CD4-positive, alpha-beta T cell (primary cell): ENCODE measurements at regions of chr4 and their contacts with region 1.

Region 1: DNA sequence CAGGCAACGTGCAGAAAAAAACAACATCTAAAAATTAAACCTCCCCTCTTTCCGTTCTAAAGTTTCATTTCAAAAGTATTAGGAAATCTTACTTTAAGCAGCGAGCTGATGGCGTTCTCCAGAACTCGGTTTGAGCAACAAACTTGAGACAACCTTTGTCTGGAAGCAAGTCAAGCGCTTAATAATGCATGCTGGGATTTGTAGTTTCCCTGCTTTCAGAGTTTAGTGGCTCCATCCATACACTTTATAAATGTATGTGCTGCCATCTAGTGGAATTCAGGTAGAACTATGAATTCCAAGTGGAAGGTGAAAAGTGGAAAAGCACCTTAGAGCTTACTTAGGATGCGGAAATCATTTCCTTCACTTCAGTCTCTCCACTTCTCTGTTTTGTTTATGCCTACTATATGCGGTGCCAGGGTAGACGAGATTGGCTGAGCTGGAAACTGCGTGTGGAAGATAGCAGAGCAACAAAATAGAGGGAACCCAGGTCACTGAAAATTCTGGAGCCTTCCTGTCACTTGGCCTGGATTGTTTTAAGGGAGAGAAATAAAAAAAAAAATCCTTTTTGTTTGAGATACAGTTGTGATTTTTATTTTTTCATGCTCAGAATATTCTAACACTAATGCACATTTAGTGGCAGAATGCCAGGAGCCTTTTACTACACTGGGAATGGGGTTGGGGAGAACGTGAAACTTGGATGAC is at the start of gene BDH2:
- DNase-seq: peak in 10 of 14 experiments; percentile 7 to 92 (median 36)
- ATAC-seq: peak; percentile 99
- H3K4me3 ChIP-seq: peak within 1 kb of the TSS; percentile 52
- H3K4me3 Mint-ChIP-seq: peak within 1 kb of the TSS; percentile 92
- H3K27ac ChIP-seq: no peak within 1 kb of the TSS
- H3K27ac Mint-ChIP-seq: peak within 1 kb of the TSS; percentile 79
- H3K4me1 ChIP-seq: peaks cover 14% of the 10 kb centered on the region
- H3K4me1 Mint-ChIP-seq: peaks cover 33% of the 10 kb centered on the region
- H3K27me3 ChIP-seq: no peaks in the 10 kb centered on the region
- H3K27me3 Mint-ChIP-seq: no peaks in the 10 kb centered on the region
- CTCF ChIP-seq: peak; percentile 82
- total RNA-seq, gene BDH2: 9.9 to 10.3 TPM

Region 2: GRCh38 chr4:102430461-102430910 is 669.4 kb before region 1 on chr4:
- CTCF ChIA-PET with region 1: interaction called, 4 read pairs
- POLR2A ChIA-PET with region 1: interaction called, 3 read pairs
- intact Hi-C with region 1: loop called (anchors 5 kb)
- DNase-seq: peak in 1 of 14 experiments; percentile 13
- ATAC-seq: no peak
- H3K4me3 ChIP-seq: peak overlapping the region; percentile 66
- H3K4me3 Mint-ChIP-seq: peak overlapping the region; percentile 87
- H3K27ac ChIP-seq: no peak overlapping the region
- H3K27ac Mint-ChIP-seq: peak overlapping the region; percentile 74
- H3K4me1 ChIP-seq: no peaks in the 10 kb centered on the region
- H3K4me1 Mint-ChIP-seq: peaks cover 6% of the 10 kb centered on the region
- H3K27me3 ChIP-seq: no peaks in the 10 kb centered on the region
- H3K27me3 Mint-ChIP-seq: no peaks in the 10 kb centered on the region
- CTCF ChIP-seq: no peak

Region 3: DNA sequence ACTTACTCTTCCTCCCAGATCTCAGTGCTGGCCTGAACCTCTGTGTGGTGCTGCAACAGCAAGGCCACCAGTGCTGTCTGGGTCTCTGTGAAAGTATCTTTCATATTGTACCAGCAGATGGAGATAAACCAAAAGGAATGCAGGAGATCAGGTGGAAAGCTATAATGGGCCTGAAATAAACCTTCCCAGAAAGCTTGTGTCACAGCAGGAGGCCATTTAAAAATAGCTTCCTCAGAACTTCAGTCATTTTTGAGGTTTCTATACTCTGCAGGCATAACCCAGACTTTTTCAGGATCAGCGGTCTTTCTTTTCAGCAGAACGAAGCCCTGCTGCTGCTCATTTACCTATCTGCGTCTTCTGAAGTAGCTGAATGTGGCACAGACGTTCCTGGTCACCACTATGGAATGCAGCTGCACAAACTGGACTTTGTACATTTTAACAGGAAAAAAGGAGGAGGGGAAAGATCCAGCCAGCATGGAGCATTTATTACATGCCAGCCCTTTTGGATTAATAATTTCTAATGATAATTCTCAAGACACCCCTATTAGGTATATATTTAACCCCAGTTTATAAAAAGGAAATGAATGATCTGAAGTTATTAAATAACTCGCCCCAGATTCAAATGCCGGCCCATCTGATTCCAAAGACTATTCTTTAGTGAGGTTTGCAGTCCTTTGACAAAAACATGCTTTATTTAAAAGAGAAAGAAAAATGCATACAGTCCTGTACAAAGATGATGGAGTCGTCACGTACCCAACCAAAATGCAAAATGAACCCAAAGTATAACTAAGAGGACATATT is 478.9 kb before region 1 on chr4:
- CTCF ChIA-PET with region 1: interaction called, 3 read pairs
- POLR2A ChIA-PET with region 1: no interaction called
- intact Hi-C with region 1: loop called in 1 of 2 experiments (anchors 5 kb)
- DNase-seq: peak in 3 of 14 experiments; percentile 48 to 60 (median 56)
- ATAC-seq: peak; percentile 48
- H3K4me3 ChIP-seq: no peak overlapping the region
- H3K4me3 Mint-ChIP-seq: no peak overlapping the region
- H3K27ac ChIP-seq: no peak overlapping the region
- H3K27ac Mint-ChIP-seq: peak overlapping the region; percentile 34
- H3K4me1 ChIP-seq: peaks cover 16% of the 10 kb centered on the region
- H3K4me1 Mint-ChIP-seq: peaks cover 40% of the 10 kb centered on the region
- H3K27me3 ChIP-seq: no peaks in the 10 kb centered on the region
- H3K27me3 Mint-ChIP-seq: no peaks in the 10 kb centered on the region
- CTCF ChIP-seq: peak; percentile 26

Region 4: GRCh38 chr4:103046416-103047290 is 53.2 kb before region 1 on chr4:
- CTCF ChIA-PET with region 1: interaction called, 3 read pairs
- POLR2A ChIA-PET with region 1: interaction called, 3 read pairs
- intact Hi-C with region 1: loop called in 1 of 2 experiments (anchors 2 kb)
- DNase-seq: peak in 12 of 14 experiments; percentile 7 to 73 (median 14)
- ATAC-seq: peak; percentile 100
- H3K4me3 ChIP-seq: no peak overlapping the region
- H3K4me3 Mint-ChIP-seq: no peak overlapping the region
- H3K27ac ChIP-seq: no peak overlapping the region
- H3K27ac Mint-ChIP-seq: no peak overlapping the region
- H3K4me1 ChIP-seq: no peaks in the 10 kb centered on the region
- H3K4me1 Mint-ChIP-seq: no peaks in the 10 kb centered on the region
- H3K27me3 ChIP-seq: no peaks in the 10 kb centered on the region
- H3K27me3 Mint-ChIP-seq: no peaks in the 10 kb centered on the region
- CTCF ChIP-seq: peak; percentile 76

Region 5: GRCh38 chr4:103118166-103118565 is 18.3 kb after region 1 on chr4:
- CTCF ChIA-PET with region 1: no interaction called
- POLR2A ChIA-PET with region 1: no interaction called
- intact Hi-C with region 1: no loop called
- DNase-seq: no peak
- ATAC-seq: no peak
- H3K4me3 ChIP-seq: no peak overlapping the region
- H3K4me3 Mint-ChIP-seq: no peak overlapping the region
- H3K27ac ChIP-seq: no peak overlapping the region
- H3K27ac Mint-ChIP-seq: no peak overlapping the region
- H3K4me1 ChIP-seq: no peaks in the 10 kb centered on the region
- H3K4me1 Mint-ChIP-seq: no peaks in the 10 kb centered on the region
- H3K27me3 ChIP-seq: no peaks in the 10 kb centered on the region
- H3K27me3 Mint-ChIP-seq: no peaks in the 10 kb centered on the region
- CTCF ChIP-seq: no peak

Region 6: DNA sequence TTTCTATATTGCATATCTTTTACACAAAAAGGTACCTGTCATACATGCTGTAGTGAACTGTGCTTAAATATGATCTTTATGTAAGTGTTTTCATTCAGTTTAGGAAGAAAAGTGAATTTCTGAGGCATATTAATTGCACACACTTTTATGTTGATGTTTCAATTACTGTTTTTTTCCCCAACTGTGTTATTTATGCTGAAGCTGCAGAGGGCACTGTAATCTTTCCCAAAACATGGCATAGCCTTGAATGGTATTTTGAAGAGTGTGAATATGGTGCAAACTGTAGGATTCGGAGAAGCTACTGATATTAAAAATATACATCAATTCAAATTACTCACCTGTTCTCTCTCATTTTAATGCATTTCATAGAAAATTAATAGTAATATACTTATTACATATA is 104.3 kb after region 1 on chr4:
- CTCF ChIA-PET with region 1: no interaction called
- POLR2A ChIA-PET with region 1: no interaction called
- intact Hi-C with region 1: loop called in 1 of 2 experiments (anchors 5 kb)
- DNase-seq: no peak
- ATAC-seq: no peak
- H3K4me3 ChIP-seq: no peak overlapping the region
- H3K4me3 Mint-ChIP-seq: no peak overlapping the region
- H3K27ac ChIP-seq: no peak overlapping the region
- H3K27ac Mint-ChIP-seq: no peak overlapping the region
- H3K4me1 ChIP-seq: peaks cover under 1% of the 10 kb centered on the region
- H3K4me1 Mint-ChIP-seq: no peaks in the 10 kb centered on the region
- H3K27me3 ChIP-seq: no peaks in the 10 kb centered on the region
- H3K27me3 Mint-ChIP-seq: peaks cover 3% of the 10 kb centered on the region
- CTCF ChIP-seq: no peak